ENCODE measurements at regions of chr6 and their contacts with region 1.

Region 1: DNA sequence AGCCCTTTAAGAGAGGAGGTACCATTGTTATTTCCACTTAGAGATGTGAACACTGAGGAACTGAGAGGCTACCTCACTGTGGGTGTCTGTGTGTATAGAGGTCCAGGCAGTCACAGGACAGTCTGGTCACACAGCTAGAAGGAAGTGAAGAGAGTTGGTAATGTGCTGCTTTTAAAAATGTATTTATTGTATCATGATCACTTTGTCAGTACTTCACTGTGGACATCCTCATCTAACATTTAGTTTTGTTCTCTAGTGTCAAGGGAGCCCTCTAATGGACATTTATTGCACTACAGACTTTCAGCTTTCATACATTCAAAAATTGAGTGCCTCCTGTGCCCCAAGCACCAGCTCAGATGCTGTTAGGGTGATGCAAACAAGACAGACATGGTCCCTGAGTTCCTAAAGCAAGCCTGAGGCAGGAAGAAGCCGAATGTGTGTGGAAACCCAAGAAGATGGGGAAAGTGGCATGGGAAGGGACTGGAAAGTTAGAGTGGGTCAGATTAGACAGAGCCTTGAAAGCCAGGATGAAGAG is 123.0 kb downstream of the SLC16A10 start:
- DNase-seq: peak; percentile 48
- ATAC-seq: peak; percentile 60
- H3K4me3 Mint-ChIP-seq: no peak overlapping the region
- H3K27ac Mint-ChIP-seq: no peak overlapping the region
- H3K4me1 Mint-ChIP-seq: peaks cover 7% of the 10 kb centered on the region
- H3K27me3 Mint-ChIP-seq: no peaks in the 10 kb centered on the region

Region 2: GRCh38 chr6:111052036-111052570 is 158.2 kb before region 1 on chr6:
- CTCF ChIA-PET with region 1: interaction called, 55 read pairs
- POLR2A ChIA-PET with region 1: no interaction called
- DNase-seq: no peak
- ATAC-seq: no peak
- H3K4me3 Mint-ChIP-seq: no peak overlapping the region
- H3K27ac Mint-ChIP-seq: no peak overlapping the region
- H3K4me1 Mint-ChIP-seq: no peaks in the 10 kb centered on the region
- H3K27me3 Mint-ChIP-seq: no peaks in the 10 kb centered on the region

Region 3: DNA sequence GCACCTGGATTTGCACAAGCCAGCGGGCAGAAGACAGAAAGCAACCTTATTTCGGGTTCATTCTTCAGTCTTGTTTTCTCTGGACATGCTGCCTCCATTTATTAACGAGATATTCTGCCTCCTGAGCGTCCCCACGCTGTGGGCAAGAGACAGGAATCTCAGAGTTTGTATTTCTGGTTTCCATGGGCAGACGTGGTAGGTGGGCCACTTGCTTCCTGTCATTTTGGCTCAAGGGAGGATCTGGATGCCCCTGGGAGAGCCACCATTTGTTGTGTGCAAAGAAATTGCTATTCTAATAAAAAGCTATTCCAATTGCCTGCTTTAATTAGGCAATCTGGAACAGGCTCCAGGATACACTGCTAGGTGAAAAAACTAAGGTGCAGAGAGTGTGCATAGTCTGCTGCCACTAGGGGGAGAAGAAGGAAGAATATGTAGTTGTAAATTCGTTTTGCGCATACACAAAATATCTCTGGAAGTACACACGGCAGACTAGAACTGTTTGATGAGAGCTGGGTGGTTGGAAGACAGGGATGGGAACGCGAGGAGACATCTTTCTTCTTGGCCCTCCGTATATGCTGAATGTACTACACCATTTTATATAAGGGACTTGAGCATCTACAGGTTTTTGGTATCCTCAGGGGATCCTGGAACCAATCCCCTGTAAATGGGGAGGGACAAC is 153.0 kb before region 1 on chr6:
- CTCF ChIA-PET with region 1: interaction called, 55 read pairs
- POLR2A ChIA-PET with region 1: no interaction called
- DNase-seq: peak; percentile 20
- ATAC-seq: peak; percentile 58
- H3K4me3 Mint-ChIP-seq: no peak overlapping the region
- H3K27ac Mint-ChIP-seq: no peak overlapping the region
- H3K4me1 Mint-ChIP-seq: no peaks in the 10 kb centered on the region
- H3K27me3 Mint-ChIP-seq: peaks cover 6% of the 10 kb centered on the region

Region 4: GRCh38 chr6:111175109-111175508 is 35.2 kb before region 1 on chr6:
- CTCF ChIA-PET with region 1: interaction called, 12 read pairs
- POLR2A ChIA-PET with region 1: no interaction called
- DNase-seq: no peak
- ATAC-seq: no peak
- H3K4me3 Mint-ChIP-seq: no peak overlapping the region
- H3K27ac Mint-ChIP-seq: no peak overlapping the region
- H3K4me1 Mint-ChIP-seq: peaks cover 24% of the 10 kb centered on the region
- H3K27me3 Mint-ChIP-seq: no peaks in the 10 kb centered on the region

Measured in activated CD8-positive, alpha-beta T cell treated with anti-CD3 and anti-CD28 coated beads, Interleukin-2, amount 10 ng/mL, durations not matched to agents 7 days and 5 days (primary cell).